AG04450 (cell line): ENCODE measurements at regions of chr22 and their contacts with region 1.

Region 1: GRCh38 chr22:44735540-44736488 is 16.6 kb upstream of the ARHGAP8 start:
- DNase-seq: no peak
- H3K4me3 ChIP-seq: no peak overlapping the region
- H3K27ac ChIP-seq: no peak overlapping the region
- H3K27me3 ChIP-seq: no peaks in the 10 kb centered on the region
- CTCF ChIP-seq: peak; percentile 84

Region 2: GRCh38 chr22:44325718-44326490 is 409.9 kb before region 1 on chr22:
- CTCF ChIA-PET with region 1: no interaction called
- POLR2A ChIA-PET with region 1: interaction called, 15 read pairs
- DNase-seq: no peak
- H3K4me3 ChIP-seq: peak overlapping the region; percentile 68
- H3K27ac ChIP-seq: no peak overlapping the region
- H3K27me3 ChIP-seq: peaks cover 13% of the 10 kb centered on the region
- CTCF ChIP-seq: peak; percentile 62

Region 3: GRCh38 chr22:44608597-44609399 is 127.0 kb before region 1 on chr22:
- CTCF ChIA-PET with region 1: no interaction called
- POLR2A ChIA-PET with region 1: no interaction called
- DNase-seq: no peak
- H3K4me3 ChIP-seq: no peak overlapping the region
- H3K27ac ChIP-seq: no peak overlapping the region
- H3K27me3 ChIP-seq: peaks cover 13% of the 10 kb centered on the region
- CTCF ChIP-seq: no peak

Region 4: DNA sequence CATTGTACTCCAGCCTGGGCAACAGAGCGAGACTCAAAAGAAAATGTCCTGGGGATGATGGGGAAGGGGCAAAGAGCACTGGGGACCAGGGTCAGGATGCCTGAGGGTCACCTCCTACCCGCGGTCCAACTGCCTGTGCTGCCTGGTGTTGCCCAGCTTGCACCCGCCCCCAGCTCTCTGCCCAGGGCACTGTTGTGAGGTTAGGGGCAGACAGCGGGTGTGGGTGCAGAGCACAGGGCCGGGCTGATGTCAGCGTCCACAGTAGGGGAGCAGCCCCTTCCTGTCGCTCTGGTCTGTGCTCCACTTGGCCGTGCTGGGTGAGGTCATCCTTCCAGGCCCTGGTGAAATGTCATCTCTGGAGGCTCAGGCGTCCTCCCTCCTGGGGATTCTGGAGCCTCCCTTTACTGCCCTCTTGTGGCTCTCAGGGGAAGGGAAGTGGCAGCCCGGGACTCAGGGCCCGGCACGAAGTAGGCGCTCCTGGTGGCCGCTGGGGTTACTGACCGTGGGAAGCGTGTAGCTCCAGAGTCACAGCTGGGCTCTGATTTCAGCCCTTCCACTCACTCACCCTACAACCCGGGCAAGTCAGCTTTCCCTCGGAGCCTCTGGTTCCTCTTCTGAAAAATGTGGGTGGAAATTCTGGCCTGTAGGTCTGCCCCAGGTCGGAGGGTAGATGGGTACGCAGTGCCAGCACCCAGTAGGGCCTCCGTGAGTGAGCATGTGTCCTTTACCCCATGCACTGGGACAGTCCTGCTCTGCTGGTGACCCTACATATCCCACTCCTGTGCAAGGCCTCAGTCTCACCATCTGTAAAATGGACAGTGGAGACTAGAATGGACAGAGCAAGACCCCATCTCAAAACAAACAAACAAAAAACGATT is 51.1 kb before region 1 on chr22:
- CTCF ChIA-PET with region 1: interaction called, 13 read pairs
- POLR2A ChIA-PET with region 1: no interaction called
- DNase-seq: peak; percentile 83
- H3K4me3 ChIP-seq: no peak overlapping the region
- H3K27ac ChIP-seq: peak overlapping the region; percentile 70
- H3K27me3 ChIP-seq: no peaks in the 10 kb centered on the region
- CTCF ChIP-seq: peak; percentile 100

Region 5: DNA sequence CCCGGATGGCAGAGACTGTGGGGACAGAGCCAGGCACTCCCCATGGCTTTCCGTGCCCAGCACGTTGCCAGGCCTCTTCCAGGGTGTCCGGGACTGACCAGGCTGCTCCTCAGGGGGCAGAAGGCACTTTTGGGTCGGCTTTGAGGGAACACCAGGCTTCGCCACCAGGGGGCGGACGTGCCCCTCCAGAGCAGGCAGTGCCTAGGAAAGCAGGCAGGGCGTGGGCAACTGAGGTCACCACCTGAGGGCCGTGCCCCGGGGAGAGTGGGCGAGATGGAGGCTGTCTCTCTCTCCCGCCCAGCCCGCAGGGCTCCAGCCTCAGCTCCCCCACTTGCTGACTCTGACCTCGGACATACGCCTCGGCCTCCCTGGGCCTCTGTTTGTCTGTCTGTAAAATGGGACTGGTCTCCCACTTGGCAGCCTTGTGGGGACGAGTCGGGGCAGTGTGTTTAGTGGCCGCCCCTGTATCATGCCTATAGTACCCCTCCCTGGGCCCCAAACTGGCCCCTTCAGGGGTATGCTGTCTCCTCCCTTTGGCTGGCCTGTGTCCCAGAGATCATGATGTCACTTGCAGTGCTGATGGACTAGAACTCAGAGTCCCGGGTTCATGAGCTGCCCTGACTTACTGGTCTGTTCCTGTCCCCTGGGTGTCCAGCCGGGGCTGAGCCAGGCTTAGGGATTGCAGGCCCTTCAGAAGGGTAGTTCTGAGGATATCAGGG is 38.2 kb before region 1 on chr22:
- CTCF ChIA-PET with region 1: interaction called, 14 read pairs
- POLR2A ChIA-PET with region 1: interaction called, 5 read pairs
- DNase-seq: peak; percentile 27
- H3K4me3 ChIP-seq: no peak overlapping the region
- H3K27ac ChIP-seq: peak overlapping the region; percentile 94
- H3K27me3 ChIP-seq: no peaks in the 10 kb centered on the region
- CTCF ChIP-seq: peak; percentile 93